ENCODE measurements at regions of chr12 and their contacts with region 1.

Region 1: DNA sequence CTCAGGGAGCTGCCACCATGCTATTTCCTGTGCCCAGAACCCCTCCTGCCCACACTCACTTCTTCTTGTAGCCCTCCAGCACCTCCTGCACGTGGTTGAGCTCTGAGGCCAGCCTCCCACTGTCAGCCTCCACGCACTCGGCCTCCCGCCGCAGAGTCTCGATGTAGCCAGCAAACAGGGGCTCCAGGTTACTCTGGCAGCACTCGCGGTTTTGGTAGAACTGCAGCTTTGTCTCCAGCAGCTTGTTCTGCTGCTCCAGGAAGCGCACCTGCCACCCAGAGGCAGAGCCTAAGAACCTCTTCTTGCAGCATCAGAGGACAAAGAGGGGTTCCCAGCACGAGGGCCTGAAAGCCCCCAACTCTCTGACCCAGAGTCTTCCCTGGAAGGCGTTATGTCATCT is 2.1 kb downstream of the KRT83 start:
- DNase-seq: peak; percentile 37
- H3K4me3 Mint-ChIP-seq: no peak overlapping the region
- H3K27ac Mint-ChIP-seq: no peak overlapping the region
- H3K4me1 Mint-ChIP-seq: peaks cover 8% of the 10 kb centered on the region
- H3K27me3 Mint-ChIP-seq: no peaks in the 10 kb centered on the region
- CTCF ChIP-seq: no peak

Region 2: DNA sequence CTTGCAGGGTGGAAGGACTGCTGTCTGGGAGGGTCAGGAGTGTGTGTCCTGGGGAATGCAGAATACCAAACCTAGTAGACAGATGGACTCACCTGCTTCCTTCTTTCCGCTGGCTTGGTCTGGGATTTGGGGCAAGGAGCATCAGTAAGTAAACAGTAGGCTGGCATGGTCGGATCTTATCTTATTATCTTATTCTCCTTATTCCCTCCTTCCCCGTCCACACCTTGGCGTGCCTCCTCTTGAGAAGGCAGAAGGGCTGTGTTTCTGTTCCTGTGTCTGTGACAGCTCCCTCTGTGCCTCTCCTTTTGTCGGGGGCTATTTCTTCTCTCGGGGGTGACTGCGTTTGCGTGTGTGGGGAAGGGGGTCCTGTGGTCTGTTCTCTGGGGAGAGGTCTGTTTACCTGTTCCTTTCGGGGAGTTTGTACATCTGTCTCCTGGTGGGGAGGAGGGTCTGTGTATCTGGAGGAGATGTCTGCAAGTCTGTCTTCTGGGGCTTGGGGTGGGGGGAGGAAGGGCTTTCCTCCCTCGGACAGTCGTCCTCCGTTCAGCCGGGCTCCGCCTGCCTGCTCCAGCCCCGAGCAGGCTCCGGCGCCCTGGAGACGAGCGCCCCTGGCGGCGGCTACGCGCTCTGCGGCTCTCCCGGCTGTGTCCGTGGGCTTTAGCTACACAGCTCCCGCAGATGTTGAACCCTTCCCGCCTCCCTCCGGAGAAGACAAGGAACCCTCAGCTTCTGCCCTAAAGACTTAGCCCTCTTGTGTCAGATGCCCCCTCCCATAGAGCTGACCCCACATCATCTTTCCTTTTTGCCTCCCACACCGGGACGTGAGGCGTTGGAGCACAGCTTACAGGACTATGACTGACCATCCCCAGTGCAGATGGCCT is 40.3 kb before region 1 on chr12:
- CTCF ChIA-PET with region 1: interaction called, 11 read pairs
- intact Hi-C with region 1: no loop called
- DNase-seq: peak; percentile 87
- H3K4me3 Mint-ChIP-seq: peak overlapping the region; percentile 54
- H3K27ac Mint-ChIP-seq: peak overlapping the region; percentile 100
- H3K4me1 Mint-ChIP-seq: peaks cover 40% of the 10 kb centered on the region
- H3K27me3 Mint-ChIP-seq: no peaks in the 10 kb centered on the region
- CTCF ChIP-seq: peak; percentile 82

Measured in Calu3 (cell line).